B cell (primary cell): ENCODE measurements at regions of chr3 and their contacts with region 1.

Region 1: DNA sequence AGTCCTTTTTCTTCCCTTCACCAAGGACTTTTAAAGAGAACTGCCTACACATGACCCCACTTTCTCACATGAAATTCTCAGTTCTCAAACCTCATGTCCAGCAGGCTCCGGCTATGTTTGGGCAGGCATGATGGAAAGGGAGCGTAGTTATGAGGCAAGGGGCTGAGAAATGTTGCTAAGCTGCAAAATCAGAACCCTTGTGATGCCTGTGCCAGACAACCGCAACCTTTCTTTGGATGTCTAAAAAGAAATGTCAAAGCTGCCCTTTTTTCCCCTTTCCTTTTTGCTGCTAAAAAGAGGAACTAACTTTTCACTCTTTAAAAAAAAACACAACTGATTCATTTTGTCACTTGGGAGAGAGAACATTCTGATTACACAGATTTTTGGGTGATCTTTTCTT is 19.2 kb downstream of the GNB4 start:
- DNase-seq: peak; percentile 61
- ATAC-seq: peak; percentile 75
- H3K4me3 ChIP-seq: peak overlapping the region in 4 of 5 experiments; percentile 23 to 44 (median 34)
- H3K4me3 Mint-ChIP-seq: peak overlapping the region; percentile 38
- H3K27ac ChIP-seq: peak overlapping the region; percentile 22 to 67
- H3K27ac Mint-ChIP-seq: peak overlapping the region; percentile 46
- H3K4me1 ChIP-seq: peaks cover 30 to 44% of the 10 kb centered on the region in 2 donors
- H3K4me1 Mint-ChIP-seq: peaks cover 51% of the 10 kb centered on the region
- H3K27me3 ChIP-seq: no peaks in the 10 kb centered on the region
- H3K27me3 Mint-ChIP-seq: no peaks in the 10 kb centered on the region
- CTCF ChIP-seq: no peak

Region 2: GRCh38 chr3:179260949-179261765 is 170.9 kb before region 1 on chr3:
- CTCF ChIA-PET with region 1: no interaction called
- POLR2A ChIA-PET with region 1: no interaction called
- intact Hi-C with region 1: loop called (anchors 10 kb)
- DNase-seq: peak; percentile 78
- ATAC-seq: peak; percentile 92
- H3K4me3 ChIP-seq: peak overlapping the region; percentile 48 to 77 (median 67)
- H3K4me3 Mint-ChIP-seq: peak overlapping the region; percentile 89
- H3K27ac ChIP-seq: peak overlapping the region in 1 of 2 donors; percentile 66
- H3K27ac Mint-ChIP-seq: peak overlapping the region; percentile 84
- H3K4me1 ChIP-seq: peaks cover 15 to 23% of the 10 kb centered on the region in 2 donors
- H3K4me1 Mint-ChIP-seq: peaks cover 52% of the 10 kb centered on the region
- H3K27me3 ChIP-seq: no peaks in the 10 kb centered on the region
- H3K27me3 Mint-ChIP-seq: no peaks in the 10 kb centered on the region
- CTCF ChIP-seq: no peak

Region 3: DNA sequence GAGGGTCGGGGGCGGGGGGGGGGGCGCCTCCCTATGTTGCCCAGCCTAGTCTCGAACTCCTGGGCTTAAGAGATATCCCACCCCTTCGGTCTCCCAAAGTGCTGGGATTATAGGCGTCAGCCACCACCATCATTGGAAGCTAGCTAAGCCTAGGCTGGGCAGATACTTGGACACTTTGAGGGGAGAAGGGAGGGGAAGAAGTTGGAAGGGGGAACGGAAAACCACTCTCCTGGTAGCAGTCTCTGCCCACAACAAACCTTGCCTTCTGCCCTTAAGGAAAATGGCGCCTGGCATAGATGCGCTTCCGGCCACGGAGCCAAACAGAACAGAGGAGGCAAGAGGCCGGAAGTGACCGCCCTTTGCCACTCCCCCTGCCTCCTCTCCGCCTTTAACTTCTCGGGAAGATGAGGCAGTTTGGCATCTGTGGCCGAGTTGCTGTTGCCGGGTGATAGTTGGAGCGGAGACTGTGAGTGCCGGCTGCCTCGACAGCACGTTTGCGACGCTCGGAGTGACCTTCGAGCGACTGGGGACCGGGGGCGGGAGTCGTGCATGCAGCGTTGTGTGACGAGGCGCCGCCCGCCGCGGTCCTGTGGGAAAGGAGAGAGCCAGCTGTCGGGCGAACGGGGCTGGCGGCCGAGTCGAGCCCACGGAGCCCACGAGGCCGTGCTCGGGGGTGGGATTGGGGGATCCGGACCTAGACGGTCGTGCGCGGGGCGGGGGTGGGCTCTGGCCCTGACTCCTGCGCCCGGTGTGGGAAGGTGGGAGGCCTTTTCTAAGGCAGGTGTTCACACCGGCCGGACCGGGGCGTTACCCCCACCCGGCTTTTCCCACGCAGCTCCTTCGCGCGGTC is 84.5 kb before region 1 on chr3 and contains the start of gene MFN1:
- CTCF ChIA-PET with region 1: no interaction called
- POLR2A ChIA-PET with region 1: no interaction called
- intact Hi-C with region 1: loop called (anchors 5 kb)
- DNase-seq: peak; percentile 92
- ATAC-seq: peak; percentile 88
- H3K4me3 ChIP-seq: peak within 1 kb of the TSS; percentile 83 to 99 (median 98)
- H3K4me3 Mint-ChIP-seq: peak within 1 kb of the TSS; percentile 95
- H3K27ac ChIP-seq: peak within 1 kb of the TSS; percentile 71 to 86
- H3K27ac Mint-ChIP-seq: peak within 1 kb of the TSS; percentile 93
- H3K4me1 ChIP-seq: peaks cover 17 to 32% of the 10 kb centered on the region in 2 donors
- H3K4me1 Mint-ChIP-seq: peaks cover 28% of the 10 kb centered on the region
- H3K27me3 ChIP-seq: no peaks in the 10 kb centered on the region
- H3K27me3 Mint-ChIP-seq: no peaks in the 10 kb centered on the region
- CTCF ChIP-seq: no peak
- total RNA-seq, gene MFN1: 98.9 and 108 TPM in 2 replicates

Region 4: DNA sequence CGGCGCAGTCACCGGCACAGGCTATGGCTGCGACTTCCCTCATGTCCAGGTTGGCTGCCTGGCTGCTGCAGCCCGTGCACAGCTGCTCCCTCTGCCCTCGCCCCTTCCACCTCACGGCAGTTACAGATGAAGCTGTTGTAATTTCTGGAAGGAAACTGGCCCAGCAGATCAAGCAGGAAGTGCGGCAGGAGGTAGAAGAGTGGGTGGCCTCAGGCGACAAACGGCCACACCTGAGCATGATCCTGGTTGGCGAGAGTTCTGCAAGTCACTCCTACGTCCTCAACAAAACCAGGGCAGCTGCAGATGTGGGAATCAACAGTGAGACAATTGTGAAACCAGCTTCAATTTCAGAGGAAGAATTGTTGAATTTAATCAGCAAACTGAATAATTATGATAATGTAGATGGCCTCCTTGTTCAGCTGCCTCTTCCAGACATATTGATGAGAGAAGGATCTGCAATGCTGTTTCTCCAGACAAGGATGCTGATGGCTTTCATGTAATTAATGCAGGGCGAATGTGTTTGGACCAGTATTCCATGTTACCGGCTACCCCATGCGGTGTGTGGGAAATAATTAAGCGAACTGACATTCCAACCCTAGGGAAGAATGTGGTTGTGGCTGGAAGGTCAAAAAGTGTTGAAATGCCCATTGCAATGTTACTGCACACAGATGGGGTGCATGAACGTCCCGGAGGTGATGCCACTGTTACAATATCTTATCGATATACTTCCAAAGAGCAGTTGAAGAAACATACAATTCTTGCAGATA is 32.5 kb after region 1 on chr3:
- CTCF ChIA-PET with region 1: no interaction called
- POLR2A ChIA-PET with region 1: no interaction called
- intact Hi-C with region 1: loop called (anchors 5 kb)
- DNase-seq: no peak
- ATAC-seq: no peak
- H3K4me3 ChIP-seq: no peak overlapping the region
- H3K4me3 Mint-ChIP-seq: peak overlapping the region; percentile 66
- H3K27ac ChIP-seq: no peak overlapping the region
- H3K27ac Mint-ChIP-seq: peak overlapping the region; percentile 23
- H3K4me1 ChIP-seq: peaks cover 8 to 10% of the 10 kb centered on the region in 2 donors
- H3K4me1 Mint-ChIP-seq: peaks cover 10% of the 10 kb centered on the region
- H3K27me3 ChIP-seq: peaks cover 0 to 2% (median 0%) of the 10 kb centered on the region in 4 experiments
- H3K27me3 Mint-ChIP-seq: no peaks in the 10 kb centered on the region
- CTCF ChIP-seq: no peak

Region 5: GRCh38 chr3:179775416-179776122 is 343.5 kb after region 1 on chr3:
- CTCF ChIA-PET with region 1: no interaction called
- POLR2A ChIA-PET with region 1: no interaction called
- intact Hi-C with region 1: no loop called
- DNase-seq: no peak
- ATAC-seq: no peak
- H3K4me3 ChIP-seq: no peak overlapping the region
- H3K4me3 Mint-ChIP-seq: no peak overlapping the region
- H3K27ac ChIP-seq: no peak overlapping the region
- H3K27ac Mint-ChIP-seq: no peak overlapping the region
- H3K4me1 ChIP-seq: no peaks in the 10 kb centered on the region
- H3K4me1 Mint-ChIP-seq: no peaks in the 10 kb centered on the region
- H3K27me3 ChIP-seq: no peaks in the 10 kb centered on the region
- H3K27me3 Mint-ChIP-seq: no peaks in the 10 kb centered on the region
- CTCF ChIP-seq: no peak